ENCODE measurements at regions of chr19 and their contacts with region 1.

Region 1: DNA sequence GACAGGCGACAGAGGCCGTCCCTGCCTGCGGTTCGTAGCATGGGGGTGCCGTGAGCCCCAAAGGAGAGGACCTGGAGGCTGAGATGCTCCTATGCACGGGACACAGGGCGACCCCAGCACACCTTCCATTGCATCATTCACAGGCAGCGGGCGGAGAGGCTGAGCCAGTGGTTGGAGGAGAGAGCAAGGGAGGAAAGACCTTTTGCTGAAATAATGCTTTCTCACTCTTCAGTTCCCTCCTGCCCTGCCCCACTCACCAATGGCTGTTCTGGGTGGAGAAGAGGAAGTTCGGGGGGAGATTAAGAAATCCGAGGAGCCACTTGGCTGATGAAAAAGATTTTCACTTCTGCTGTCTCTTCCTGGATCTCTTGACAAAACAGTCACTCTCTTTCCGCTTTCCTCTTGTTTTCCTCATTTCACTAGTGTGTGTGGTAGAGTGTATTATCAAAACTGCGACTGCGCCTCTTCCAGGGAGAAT is at the start of gene NLRP12:
- DNase-seq: peak; percentile 92 to 99 (median 97)
- H3K4me3 ChIP-seq: peak within 1 kb of the TSS; percentile 50 to 88 (median 71)
- H3K4me3 Mint-ChIP-seq: peak within 1 kb of the TSS; percentile 93 to 98
- H3K27ac ChIP-seq: peak within 1 kb of the TSS; percentile 93 to 95
- H3K27ac Mint-ChIP-seq: peak within 1 kb of the TSS; percentile 96 to 99 (median 98)
- H3K4me1 ChIP-seq: peaks cover 67 to 72% of the 10 kb centered on the region in 2 donors
- H3K4me1 Mint-ChIP-seq: peaks cover 61% of the 10 kb centered on the region
- H3K27me3 ChIP-seq: no peaks in the 10 kb centered on the region
- H3K27me3 Mint-ChIP-seq: peaks cover 0 to 3% (median 0%) of the 10 kb centered on the region in 3 donors
- CTCF ChIP-seq: no peak
- polyA plus RNA-seq, gene NLRP12: 40.5 to 64.9 (median 47.0) TPM

Region 2: DNA sequence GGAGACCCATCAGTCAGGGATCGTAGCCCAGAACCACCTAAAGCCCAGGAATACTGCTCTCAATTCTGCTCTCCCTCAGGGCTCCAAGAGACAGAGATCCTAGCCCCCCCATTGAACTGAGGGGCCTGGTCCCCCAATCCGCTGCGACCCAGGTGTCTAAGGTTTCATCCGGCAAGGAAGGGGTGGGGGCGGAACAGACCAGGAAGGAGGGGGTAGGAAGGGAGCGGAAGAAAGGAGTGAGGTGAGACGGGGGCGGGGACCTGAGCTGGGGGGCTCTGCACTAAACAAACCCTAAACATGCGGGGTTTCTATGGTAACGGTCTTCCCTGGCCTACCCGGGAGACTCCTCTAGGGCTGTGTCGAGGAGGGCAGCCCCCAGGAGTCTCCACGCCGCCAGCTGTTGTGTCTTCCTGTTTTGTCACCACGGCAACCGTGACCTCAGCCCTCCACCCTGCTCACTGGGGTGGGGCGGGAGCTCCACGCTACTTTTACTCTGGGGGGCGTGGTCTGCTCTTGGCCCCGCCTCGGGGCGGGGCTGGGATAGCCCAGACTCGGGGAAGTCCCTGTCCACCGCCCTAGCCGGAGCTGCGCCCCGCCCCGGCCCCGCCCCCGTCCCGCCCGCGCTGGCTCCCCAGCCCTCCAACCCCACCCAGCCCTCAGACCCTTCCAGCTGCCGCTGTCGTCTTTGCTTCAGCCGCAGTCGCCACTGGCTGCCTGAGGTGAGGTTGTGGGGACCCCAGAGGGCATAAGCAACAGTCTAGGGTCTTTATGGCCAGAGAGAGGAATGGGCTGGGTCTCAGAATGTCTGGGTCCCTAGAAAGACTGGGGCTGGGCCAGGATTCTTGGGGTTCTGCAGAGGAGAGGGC is 43.3 kb after region 1 on chr19 and contains the start of gene MYADM:
- intact Hi-C with region 1: loop called (anchors 5 to 10 kb)
- DNase-seq: peak; percentile 99 to 100 (median 99)
- H3K4me3 ChIP-seq: peak within 1 kb of the TSS; percentile 77 to 100 (median 100)
- H3K4me3 Mint-ChIP-seq: peak within 1 kb of the TSS; percentile 97 to 99
- H3K27ac ChIP-seq: peak within 1 kb of the TSS; percentile 99
- H3K27ac Mint-ChIP-seq: peak within 1 kb of the TSS; percentile 98 to 100 (median 99)
- H3K4me1 ChIP-seq: peaks cover 47 to 52% of the 10 kb centered on the region in 2 donors
- H3K4me1 Mint-ChIP-seq: peaks cover 49% of the 10 kb centered on the region
- H3K27me3 ChIP-seq: no peaks in the 10 kb centered on the region
- H3K27me3 Mint-ChIP-seq: peaks cover 0 to 20% (median 18%) of the 10 kb centered on the region in 3 donors
- CTCF ChIP-seq: no peak
- polyA plus RNA-seq, gene MYADM: 162 to 310 (median 254) TPM

Region 3: GRCh38 chr19:53879140-53880081 is 55.2 kb after region 1 on chr19:
- intact Hi-C with region 1: loop called (anchors 5 to 10 kb)
- DNase-seq: peak; percentile 59 to 69 (median 67)
- H3K4me3 ChIP-seq: peak overlapping the region; percentile 28 to 79 (median 75)
- H3K4me3 Mint-ChIP-seq: no peak overlapping the region
- H3K27ac ChIP-seq: peak overlapping the region in 1 of 2 donors; percentile 16
- H3K27ac Mint-ChIP-seq: peak overlapping the region in 5 of 7 donors; percentile 6 to 75 (median 70)
- H3K4me1 ChIP-seq: peaks cover 54 to 70% of the 10 kb centered on the region in 2 donors
- H3K4me1 Mint-ChIP-seq: peaks cover 46% of the 10 kb centered on the region
- H3K27me3 ChIP-seq: peaks cover 32 to 40% of the 10 kb centered on the region in 2 donors
- H3K27me3 Mint-ChIP-seq: peaks cover 0 to 29% (median 25%) of the 10 kb centered on the region in 3 donors
- CTCF ChIP-seq: no peak

Region 4: GRCh38 chr19:54023191-54023590 is 199.0 kb after region 1 on chr19:
- intact Hi-C with region 1: loop called (anchors 5 to 10 kb)
- DNase-seq: peak in 1 of 3 donors; percentile 41
- H3K4me3 ChIP-seq: peak overlapping the region in 2 of 3 experiments; percentile 41 to 72
- H3K4me3 Mint-ChIP-seq: no peak overlapping the region
- H3K27ac ChIP-seq: peak overlapping the region; percentile 86 to 95
- H3K27ac Mint-ChIP-seq: peak overlapping the region; percentile 93 to 100 (median 99)
- H3K4me1 ChIP-seq: peaks cover 66% of the 10 kb centered on the region in 2 donors
- H3K4me1 Mint-ChIP-seq: peaks cover 67% of the 10 kb centered on the region
- H3K27me3 ChIP-seq: no peaks in the 10 kb centered on the region
- H3K27me3 Mint-ChIP-seq: peaks cover 4 to 8% (median 4%) of the 10 kb centered on the region in 3 donors
- CTCF ChIP-seq: no peak

Region 5: DNA sequence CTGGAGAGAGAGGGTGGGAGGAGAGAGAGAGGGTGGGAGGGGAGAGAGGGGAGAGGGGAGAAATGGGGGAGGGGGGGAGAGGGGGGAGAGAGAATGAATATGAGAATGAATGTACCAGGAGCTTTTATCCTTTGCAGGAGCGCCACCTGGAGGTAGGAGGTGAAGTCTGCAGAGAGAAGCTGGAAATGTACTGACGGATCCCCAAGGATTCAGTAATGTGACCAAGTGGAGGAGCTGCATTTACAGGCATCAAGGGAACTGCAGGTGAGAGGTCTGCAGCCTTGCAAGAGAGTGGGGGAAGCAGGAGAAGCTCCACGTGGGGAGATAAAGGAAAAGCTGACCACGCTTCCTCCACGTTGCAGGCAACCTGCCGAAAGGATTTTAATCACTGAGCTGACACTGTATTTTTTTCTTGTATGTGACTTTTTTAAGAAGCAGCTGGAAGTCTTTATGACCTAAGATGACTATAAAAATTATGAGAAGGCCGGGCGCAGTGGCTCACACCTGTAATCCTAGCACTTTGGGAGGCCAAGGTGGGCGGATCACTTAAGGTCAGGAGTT is 205.8 kb after region 1 on chr19:
- intact Hi-C with region 1: loop called in 1 of 2 experiments (anchors 10 kb)
- DNase-seq: peak; percentile 53 to 71 (median 66)
- H3K4me3 ChIP-seq: peak overlapping the region in 1 of 3 experiments; percentile 27
- H3K4me3 Mint-ChIP-seq: peak overlapping the region in 1 of 2 donors; percentile 83
- H3K27ac ChIP-seq: peak overlapping the region in 1 of 2 donors; percentile 62
- H3K27ac Mint-ChIP-seq: peak overlapping the region in 2 of 7 donors; percentile 86 to 93
- H3K4me1 ChIP-seq: peaks cover 17 to 24% of the 10 kb centered on the region in 2 donors
- H3K4me1 Mint-ChIP-seq: peaks cover 20% of the 10 kb centered on the region
- H3K27me3 ChIP-seq: peaks cover 0 to 6% of the 10 kb centered on the region in 2 donors
- H3K27me3 Mint-ChIP-seq: peaks cover 9 to 15% (median 14%) of the 10 kb centered on the region in 3 donors
- CTCF ChIP-seq: peak; percentile 69